Panc1 (cell line): ENCODE measurements at regions of chr9 and their contacts with region 1.

Region 1: DNA sequence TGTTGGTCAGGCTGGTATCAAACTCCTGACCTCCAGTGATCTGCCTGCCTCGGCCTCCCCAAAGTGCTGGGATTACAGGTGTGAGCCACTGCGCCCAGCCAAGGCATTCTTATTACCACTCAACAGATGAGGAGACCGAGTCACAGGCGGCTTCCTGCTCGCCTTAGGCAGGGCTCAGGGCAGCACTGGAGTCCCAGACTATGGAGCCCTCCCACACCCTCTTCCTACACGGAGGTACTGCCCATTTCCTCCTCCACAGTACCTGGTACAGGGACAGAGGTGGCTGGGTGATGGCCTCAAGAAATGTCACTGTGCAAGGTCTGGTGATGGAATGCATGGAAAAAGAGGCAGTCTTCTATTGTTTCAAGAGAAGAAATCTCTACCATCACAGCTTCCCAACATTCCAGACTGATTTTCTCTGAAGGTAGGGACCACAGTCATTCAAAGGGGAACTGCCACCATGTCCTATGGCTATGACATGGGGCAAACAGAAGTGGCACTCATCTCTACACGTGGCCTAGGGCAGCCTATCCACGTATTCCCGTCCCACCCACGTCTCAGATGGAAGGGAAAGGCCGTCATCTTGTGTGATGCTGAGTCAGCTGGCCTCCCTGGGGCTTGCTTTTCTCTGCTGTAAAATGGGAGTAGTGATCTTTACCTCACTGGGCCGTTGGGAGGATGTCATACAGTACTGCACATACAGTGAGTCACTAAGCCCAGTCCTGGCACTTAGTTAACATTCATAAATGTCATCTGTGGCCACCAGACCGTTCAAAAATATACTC is 72.5 kb downstream of the RAPGEF1 start:
- DNase-seq: no peak
- ATAC-seq: no peak
- H3K4me3 ChIP-seq: no peak overlapping the region
- H3K27ac ChIP-seq: peak overlapping the region; percentile 77
- H3K4me1 ChIP-seq: peaks cover 41% of the 10 kb centered on the region
- H3K27me3 ChIP-seq: no peaks in the 10 kb centered on the region
- CTCF ChIP-seq: no peak

Region 2: DNA sequence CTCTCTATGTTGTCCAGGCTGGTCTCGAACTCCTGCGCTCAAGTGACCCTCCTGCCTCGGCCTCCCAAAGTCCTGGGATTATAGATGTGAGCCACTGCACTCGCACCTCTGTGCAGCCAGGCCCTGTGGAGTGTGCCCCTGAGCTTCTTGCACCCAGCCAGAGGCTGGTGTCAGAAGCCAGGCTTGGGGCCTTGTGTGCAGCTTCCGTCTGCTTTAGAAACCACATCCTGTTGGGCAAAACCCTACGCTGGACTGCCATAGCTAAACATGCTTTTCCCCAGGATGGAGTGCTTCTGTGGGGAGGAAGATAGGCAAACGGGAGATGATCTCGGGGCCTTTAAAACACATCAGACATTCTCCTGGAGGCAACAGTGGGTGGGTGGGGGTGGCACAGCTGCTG is 82.0 kb before region 1 on chr9:
- CTCF ChIA-PET with region 1: no interaction called
- POLR2A ChIA-PET with region 1: interaction called, 10 read pairs
- in situ Hi-C with region 1: no loop called
- intact Hi-C with region 1: no loop called
- DNase-seq: no peak
- ATAC-seq: no peak
- H3K4me3 ChIP-seq: no peak overlapping the region
- H3K27ac ChIP-seq: no peak overlapping the region
- H3K4me1 ChIP-seq: no peaks in the 10 kb centered on the region
- H3K27me3 ChIP-seq: no peaks in the 10 kb centered on the region
- CTCF ChIP-seq: no peak

Region 3: DNA sequence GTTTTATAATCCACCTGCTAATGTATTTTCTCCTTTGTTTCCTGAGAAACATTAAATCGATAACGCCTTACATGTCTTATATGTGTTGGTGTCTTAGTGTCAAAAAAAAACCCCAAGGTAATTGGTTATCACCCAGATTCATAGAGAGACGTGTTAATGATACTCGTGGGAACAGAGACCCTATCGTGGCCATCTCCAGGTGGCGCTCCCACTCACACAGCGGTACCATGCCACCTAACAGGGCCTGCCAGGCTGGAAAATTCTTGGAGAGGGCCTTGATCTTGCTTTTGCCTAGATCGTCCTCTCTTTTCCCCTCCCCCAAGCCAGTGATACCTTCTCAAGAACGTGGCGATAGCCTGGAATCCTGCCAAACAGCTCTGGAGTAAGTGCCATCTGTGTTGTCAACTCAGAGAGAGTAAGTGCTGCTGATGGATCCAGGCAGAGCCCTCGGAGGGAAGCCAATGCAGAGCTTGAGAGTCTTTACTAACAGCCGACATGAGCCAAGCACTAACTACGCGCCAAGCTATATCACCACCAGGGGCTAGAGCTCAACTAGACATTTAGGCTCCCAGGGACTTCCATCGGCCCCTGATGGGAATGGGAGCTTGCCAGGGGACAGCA is 54.7 kb after region 1 on chr9:
- CTCF ChIA-PET with region 1: no interaction called
- POLR2A ChIA-PET with region 1: no interaction called
- in situ Hi-C with region 1: no loop called
- intact Hi-C with region 1: no loop called
- DNase-seq: no peak
- ATAC-seq: no peak
- H3K4me3 ChIP-seq: no peak overlapping the region
- H3K27ac ChIP-seq: no peak overlapping the region
- H3K4me1 ChIP-seq: peaks cover 11% of the 10 kb centered on the region
- H3K27me3 ChIP-seq: no peaks in the 10 kb centered on the region
- CTCF ChIP-seq: no peak; the same call in 1 of the 2 replicates

Region 4: DNA sequence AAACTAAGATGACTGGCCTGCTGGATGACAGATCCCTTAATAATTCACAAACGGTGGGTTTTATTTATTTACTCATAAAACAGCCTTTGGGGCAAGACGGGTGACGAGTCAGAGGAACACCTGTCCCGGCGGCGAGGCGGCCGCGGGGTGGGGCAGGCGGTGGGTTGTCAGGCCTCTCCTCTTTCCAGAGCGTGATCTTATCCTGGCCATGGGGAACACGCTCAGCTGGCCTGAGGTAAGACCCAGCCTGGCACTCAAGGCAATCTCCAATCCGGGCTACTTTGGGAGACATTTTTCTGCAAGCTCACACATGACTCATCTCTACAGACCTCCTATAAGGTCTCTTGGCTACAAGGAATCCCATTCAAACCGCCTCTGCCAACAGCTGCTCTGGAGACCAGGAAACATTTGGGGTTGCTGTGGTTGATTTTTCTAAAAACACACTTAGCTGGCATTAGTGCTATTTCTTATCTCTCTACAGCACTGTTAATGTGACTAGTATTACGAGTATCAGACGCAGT is 66.2 kb after region 1 on chr9:
- CTCF ChIA-PET with region 1: interaction called, 15 read pairs
- POLR2A ChIA-PET with region 1: no interaction called
- in situ Hi-C with region 1: no loop called
- intact Hi-C with region 1: loop called (anchors 10 kb)
- DNase-seq: no peak
- ATAC-seq: peak; percentile 73
- H3K4me3 ChIP-seq: peak overlapping the region in 1 of 2 experiments; percentile 23; a peak in 2 of 4 replicates
- H3K27ac ChIP-seq: peak overlapping the region; percentile 88
- H3K4me1 ChIP-seq: peaks cover 82% of the 10 kb centered on the region
- H3K27me3 ChIP-seq: no peaks in the 10 kb centered on the region
- CTCF ChIP-seq: no peak

Region 5: GRCh38 chr9:131815971-131816873 is 148.8 kb after region 1 on chr9:
- CTCF ChIA-PET with region 1: no interaction called
- POLR2A ChIA-PET with region 1: no interaction called
- in situ Hi-C with region 1: no loop called
- intact Hi-C with region 1: no loop called
- DNase-seq: no peak
- ATAC-seq: peak; percentile 70
- H3K4me3 ChIP-seq: peak overlapping the region in 1 of 2 experiments; percentile 23; a peak in 1 of 4 replicates
- H3K27ac ChIP-seq: no peak overlapping the region
- H3K4me1 ChIP-seq: no peaks in the 10 kb centered on the region; the same call in 1 of the 2 replicates
- H3K27me3 ChIP-seq: no peaks in the 10 kb centered on the region
- CTCF ChIP-seq: no peak; the same call in 1 of the 2 replicates